MCF 10A (cell line): ENCODE measurements at regions of chr17 and their contacts with region 1.

Region 1: GRCh38 chr17:50668025-50668837 is 33.5 kb downstream of the ABCC3 start:
- DNase-seq: peak; percentile 58
- H3K4me3 Mint-ChIP-seq: peak overlapping the region; percentile 40
- H3K27ac Mint-ChIP-seq: peak overlapping the region; percentile 77
- H3K4me1 Mint-ChIP-seq: peaks cover 53% of the 10 kb centered on the region
- H3K27me3 Mint-ChIP-seq: no peaks in the 10 kb centered on the region
- CTCF ChIP-seq: no peak

Region 2: GRCh38 chr17:50493744-50494143 is 174.5 kb before region 1 on chr17:
- CTCF ChIA-PET with region 1: no interaction called
- POLR2A ChIA-PET with region 1: no interaction called
- intact Hi-C with region 1: no loop called
- DNase-seq: no peak
- H3K4me3 Mint-ChIP-seq: no peak overlapping the region
- H3K27ac Mint-ChIP-seq: no peak overlapping the region
- H3K4me1 Mint-ChIP-seq: peaks cover 4% of the 10 kb centered on the region
- H3K27me3 Mint-ChIP-seq: no peaks in the 10 kb centered on the region
- CTCF ChIP-seq: no peak

Region 3: GRCh38 chr17:50686494-50687199 is 18.4 kb after region 1 on chr17:
- CTCF ChIA-PET with region 1: interaction called, 4 read pairs
- POLR2A ChIA-PET with region 1: interaction called, 28 read pairs
- intact Hi-C with region 1: no loop called
- DNase-seq: peak; percentile 96
- H3K4me3 Mint-ChIP-seq: peak overlapping the region; percentile 11
- H3K27ac Mint-ChIP-seq: peak overlapping the region; percentile 37
- H3K4me1 Mint-ChIP-seq: peaks cover 40% of the 10 kb centered on the region
- H3K27me3 Mint-ChIP-seq: no peaks in the 10 kb centered on the region
- CTCF ChIP-seq: no peak

Region 4: GRCh38 chr17:50691545-50692447 is 23.6 kb after region 1 on chr17:
- CTCF ChIA-PET with region 1: interaction called, 16 read pairs
- POLR2A ChIA-PET with region 1: interaction called, 28 read pairs
- intact Hi-C with region 1: no loop called
- DNase-seq: peak; percentile 79
- H3K4me3 Mint-ChIP-seq: no peak overlapping the region
- H3K27ac Mint-ChIP-seq: peak overlapping the region; percentile 42
- H3K4me1 Mint-ChIP-seq: peaks cover 52% of the 10 kb centered on the region
- H3K27me3 Mint-ChIP-seq: no peaks in the 10 kb centered on the region
- CTCF ChIP-seq: no peak